ENCODE measurements at regions of chr13 and their contacts with region 1.

Region 1: DNA sequence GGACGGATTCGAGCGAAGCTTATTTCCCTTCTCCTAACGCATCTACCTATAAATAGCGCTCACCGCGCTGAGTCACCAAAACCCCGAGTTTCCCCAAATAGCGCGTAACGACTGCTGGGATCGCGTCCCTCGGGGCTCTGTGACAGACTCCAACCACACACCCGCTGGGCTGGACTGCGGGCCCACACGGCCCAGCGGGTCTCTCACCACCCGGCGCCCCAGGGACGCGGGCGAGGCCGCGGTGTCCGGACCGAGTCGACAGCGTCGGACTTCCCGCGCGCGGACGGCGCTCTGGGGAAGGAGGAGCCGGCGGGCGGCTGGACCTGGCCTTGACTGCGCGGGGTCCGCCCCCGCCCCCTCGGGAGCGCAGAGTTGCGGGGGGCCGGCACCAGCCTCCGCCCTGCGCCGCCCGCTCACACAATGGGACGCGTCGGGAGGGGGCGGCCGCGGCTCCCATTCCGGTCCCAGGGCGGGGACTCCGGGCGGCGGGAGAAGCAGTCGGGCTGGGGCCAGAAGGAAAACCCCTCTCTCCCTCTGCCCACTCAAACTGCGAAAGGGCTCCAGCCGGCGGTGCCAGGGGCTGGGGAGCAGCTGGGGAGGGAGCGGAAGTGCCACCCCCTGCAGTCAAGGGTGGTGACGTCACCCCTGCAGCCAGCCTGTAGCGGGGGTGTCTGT is 108.8 kb downstream of the KCNRG start:
- DNase-seq: peak; percentile 78
- H3K4me3 Mint-ChIP-seq: peak overlapping the region; percentile 84
- H3K27ac Mint-ChIP-seq: peak overlapping the region; percentile 87
- H3K4me1 Mint-ChIP-seq: peaks cover 48% of the 10 kb centered on the region
- H3K27me3 Mint-ChIP-seq: peaks cover 19% of the 10 kb centered on the region

Region 2: GRCh38 chr13:49976314-49977258 is 147.4 kb before region 1 on chr13:
- CTCF ChIA-PET with region 1: interaction called, 11 read pairs
- POLR2A ChIA-PET with region 1: interaction called, 12 read pairs
- DNase-seq: peak; percentile 78
- H3K4me3 Mint-ChIP-seq: no peak overlapping the region
- H3K27ac Mint-ChIP-seq: no peak overlapping the region
- H3K4me1 Mint-ChIP-seq: peaks cover 2% of the 10 kb centered on the region
- H3K27me3 Mint-ChIP-seq: no peaks in the 10 kb centered on the region

Region 3: GRCh38 chr13:50081679-50082425 is 42.1 kb before region 1 on chr13:
- CTCF ChIA-PET with region 1: interaction called, 82 read pairs
- POLR2A ChIA-PET with region 1: interaction called, 661 read pairs
- DNase-seq: peak; percentile 99
- H3K4me3 Mint-ChIP-seq: peak overlapping the region; percentile 98
- H3K27ac Mint-ChIP-seq: peak overlapping the region; percentile 99
- H3K4me1 Mint-ChIP-seq: peaks cover 41% of the 10 kb centered on the region
- H3K27me3 Mint-ChIP-seq: no peaks in the 10 kb centered on the region

Region 4: DNA sequence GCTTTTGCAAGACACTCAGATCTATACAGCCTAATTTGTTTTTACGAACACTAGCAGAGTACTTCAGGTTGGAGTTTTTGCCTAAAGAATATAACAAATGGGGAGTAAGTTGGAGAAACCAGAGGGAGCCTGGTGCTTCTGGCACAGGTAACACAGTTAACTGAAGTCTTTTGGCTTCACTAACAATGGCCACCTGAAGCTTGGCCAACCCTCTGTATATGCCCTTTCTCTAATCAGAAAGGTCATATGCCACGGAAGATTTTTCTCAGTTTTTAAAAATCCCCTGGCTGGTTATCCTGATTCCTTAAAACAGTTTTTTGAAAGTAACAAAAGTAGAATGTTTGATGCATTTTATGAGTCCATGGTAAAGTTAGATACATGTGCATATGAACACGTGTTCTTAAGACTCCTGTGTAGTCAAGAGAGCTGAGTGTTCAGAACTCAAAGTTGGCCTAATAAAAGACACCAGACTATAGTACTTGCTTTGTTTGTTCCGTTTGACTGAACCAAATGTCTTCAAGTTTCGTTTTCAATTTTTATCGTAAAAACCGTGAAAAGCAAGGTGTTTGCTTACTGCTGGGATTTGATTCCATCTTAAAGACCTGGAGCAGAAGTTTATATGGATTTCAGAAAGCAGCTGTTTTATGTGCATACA is 28.8 kb after region 1 on chr13:
- CTCF ChIA-PET with region 1: no interaction called
- POLR2A ChIA-PET with region 1: interaction called, 14 read pairs
- DNase-seq: no peak
- H3K4me3 Mint-ChIP-seq: peak overlapping the region; percentile 56
- H3K27ac Mint-ChIP-seq: no peak overlapping the region
- H3K4me1 Mint-ChIP-seq: peaks cover 21% of the 10 kb centered on the region
- H3K27me3 Mint-ChIP-seq: peaks cover 25% of the 10 kb centered on the region

Region 5: GRCh38 chr13:50236898-50237318 is 112.9 kb after region 1 on chr13:
- CTCF ChIA-PET with region 1: interaction called, 3 read pairs
- POLR2A ChIA-PET with region 1: interaction called, 44 read pairs
- DNase-seq: peak; percentile 39
- H3K4me3 Mint-ChIP-seq: peak overlapping the region; percentile 5
- H3K27ac Mint-ChIP-seq: peak overlapping the region; percentile 53
- H3K4me1 Mint-ChIP-seq: peaks cover 26% of the 10 kb centered on the region
- H3K27me3 Mint-ChIP-seq: peaks cover 71% of the 10 kb centered on the region

Region 6: DNA sequence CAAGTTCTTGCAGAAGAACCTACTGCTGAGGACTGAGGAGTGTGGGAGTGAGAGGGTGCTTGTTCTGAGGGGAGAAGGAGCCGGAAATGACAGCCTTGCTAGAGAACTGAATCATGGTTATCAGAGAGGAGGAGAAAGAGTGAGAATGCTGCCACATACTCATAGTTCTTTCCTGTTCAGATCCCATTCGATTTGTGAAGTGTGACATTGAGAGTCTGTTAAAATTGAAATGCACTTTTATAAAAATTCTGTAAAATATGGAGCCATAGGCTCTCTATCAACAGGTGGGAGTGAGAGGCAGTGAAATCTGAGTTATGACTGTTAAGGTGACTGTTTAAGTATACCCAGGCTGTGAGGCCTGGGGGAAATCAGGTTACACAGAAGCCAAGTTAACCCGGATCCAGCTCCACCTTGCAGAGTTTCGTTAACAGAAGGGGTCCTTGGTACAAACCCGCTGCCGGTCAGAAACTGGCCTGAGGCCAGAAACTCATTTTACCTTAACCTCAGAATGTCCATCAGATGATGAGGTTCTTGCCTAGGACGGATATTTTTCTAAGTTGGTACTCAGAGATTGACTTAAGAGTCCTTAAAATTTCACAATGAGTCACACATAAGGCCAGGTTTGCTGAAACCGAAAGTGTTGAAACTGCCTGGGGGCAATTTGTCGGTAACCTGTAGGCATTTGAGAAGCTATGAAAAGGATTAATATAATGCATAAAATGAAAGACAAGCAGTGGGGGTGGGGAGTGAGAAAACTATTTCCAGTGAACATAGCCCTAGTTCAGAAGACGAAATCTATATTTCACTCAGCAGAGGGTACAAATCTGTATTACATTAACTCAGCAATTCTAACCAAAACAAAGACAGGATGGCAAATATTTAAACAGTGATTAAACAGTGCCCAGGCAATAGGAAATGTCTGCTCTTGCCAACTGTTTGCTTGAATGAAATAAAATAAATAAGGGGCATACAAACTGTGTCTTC is 241.7 kb after region 1 on chr13:
- CTCF ChIA-PET with region 1: interaction called, 5 read pairs
- POLR2A ChIA-PET with region 1: interaction called, 41 read pairs
- DNase-seq: peak; percentile 60
- H3K4me3 Mint-ChIP-seq: peak overlapping the region; percentile 67
- H3K27ac Mint-ChIP-seq: peak overlapping the region; percentile 71
- H3K4me1 Mint-ChIP-seq: peaks cover 45% of the 10 kb centered on the region
- H3K27me3 Mint-ChIP-seq: peaks cover 53% of the 10 kb centered on the region

Region 7: GRCh38 chr13:50911937-50912795 is 788.2 kb after region 1 on chr13:
- CTCF ChIA-PET with region 1: interaction called, 22 read pairs
- POLR2A ChIA-PET with region 1: interaction called, 128 read pairs
- DNase-seq: peak; percentile 95
- H3K4me3 Mint-ChIP-seq: peak overlapping the region; percentile 88
- H3K27ac Mint-ChIP-seq: peak overlapping the region; percentile 89
- H3K4me1 Mint-ChIP-seq: peaks cover 61% of the 10 kb centered on the region
- H3K27me3 Mint-ChIP-seq: no peaks in the 10 kb centered on the region